ENCODE measurements at regions of chr3 and their contacts with region 1.

Region 1: DNA sequence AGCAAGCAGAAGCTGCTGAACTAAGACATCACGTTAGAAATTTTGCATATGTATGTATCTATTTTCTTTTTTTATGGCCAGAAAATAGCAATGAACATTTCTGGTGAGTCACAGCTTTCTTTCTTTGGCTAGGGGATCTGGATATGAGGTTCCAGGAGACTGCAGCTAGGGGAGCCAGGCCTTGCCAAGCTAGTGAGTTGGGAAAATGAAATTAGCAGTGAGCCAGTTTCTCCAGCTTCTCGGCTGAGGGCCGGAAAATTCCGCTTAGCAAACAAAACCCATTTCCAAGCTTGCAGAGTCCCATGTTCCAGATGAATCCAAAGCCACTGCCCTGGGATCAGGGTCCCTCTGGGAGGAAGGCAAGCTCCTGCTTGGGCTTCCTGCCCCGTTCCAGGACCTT is 137.6 kb downstream of the SRGAP3 start:
- DNase-seq: peak in 2 of 5 donors; percentile 33 to 38
- ATAC-seq: peak in 3 of 4 donors; percentile 25 to 57 (median 38)
- H3K4me3 ChIP-seq: no peak overlapping the region
- H3K27ac ChIP-seq: no peak overlapping the region
- H3K4me1 ChIP-seq: peaks cover 0 to 9% (median 0%) of the 10 kb centered on the region in 12 donors
- H3K27me3 ChIP-seq: no peaks in the 10 kb centered on the region
- CTCF ChIP-seq: peak in 1 of 12 donors; percentile 42
- POLR2A ChIP-seq: no peak

Region 2: DNA sequence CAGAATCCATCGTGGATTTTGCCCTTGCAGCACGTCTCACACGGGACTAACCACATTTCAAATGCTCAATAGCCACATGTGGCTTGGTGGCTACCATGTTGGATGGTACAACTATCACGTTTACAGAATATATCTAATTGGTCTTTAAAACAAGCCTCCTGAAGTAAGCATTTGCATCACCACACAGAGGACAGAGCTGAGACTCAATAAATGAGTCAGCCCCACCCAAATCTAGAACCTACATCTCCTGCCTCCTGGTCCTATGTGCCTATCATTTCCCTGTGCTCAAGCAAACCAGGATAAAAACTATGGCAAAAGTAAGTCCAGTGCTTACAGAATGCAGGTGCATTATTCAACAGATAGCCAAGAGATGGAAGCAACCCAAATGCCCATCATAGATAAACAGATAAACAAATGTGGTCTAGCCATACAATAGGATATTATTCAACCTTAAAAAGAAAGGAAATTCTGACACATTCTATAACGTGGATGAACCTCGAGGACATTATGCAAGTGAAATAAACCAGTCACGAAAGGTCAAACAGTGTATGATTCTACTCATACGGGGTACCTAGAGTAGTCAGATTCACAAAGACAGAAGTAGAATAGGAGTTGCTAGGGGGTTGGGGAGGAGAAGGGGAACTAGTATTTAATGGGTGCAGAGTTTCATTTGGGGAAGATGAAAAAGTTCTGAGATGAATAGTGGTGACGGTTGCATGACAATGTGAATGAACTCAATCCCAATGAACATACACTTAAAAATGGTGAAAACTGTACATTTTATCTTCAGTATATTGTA is 93.7 kb after region 1 on chr3:
- intact Hi-C with region 1: loop called in 1 of 10 experiments (anchors 5 kb)
- DNase-seq: no peak
- ATAC-seq: no peak
- H3K4me3 ChIP-seq: no peak overlapping the region
- H3K27ac ChIP-seq: no peak overlapping the region
- H3K4me1 ChIP-seq: peaks cover 0 to 7% (median 0%) of the 10 kb centered on the region in 12 donors
- H3K27me3 ChIP-seq: no peaks in the 10 kb centered on the region
- CTCF ChIP-seq: no peak
- POLR2A ChIP-seq: no peak